Breast epithelium (tissue), 4 donors: ENCODE measurements at regions of chr11 and their contacts with region 1.

Region 1: GRCh38 chr11:124837491-124837856 is 27.8 kb upstream of the ROBO3 start:
- DNase-seq: no peak
- H3K4me3 ChIP-seq: no peak overlapping the region
- H3K27ac ChIP-seq: no peak overlapping the region
- H3K4me1 ChIP-seq: peaks cover 7 to 12% of the 10 kb centered on the region in 2 donors
- H3K27me3 ChIP-seq: peaks cover 10 to 51% of the 10 kb centered on the region in 2 donors
- CTCF ChIP-seq: no peak
- POLR2A ChIP-seq: no peak

Region 2: DNA sequence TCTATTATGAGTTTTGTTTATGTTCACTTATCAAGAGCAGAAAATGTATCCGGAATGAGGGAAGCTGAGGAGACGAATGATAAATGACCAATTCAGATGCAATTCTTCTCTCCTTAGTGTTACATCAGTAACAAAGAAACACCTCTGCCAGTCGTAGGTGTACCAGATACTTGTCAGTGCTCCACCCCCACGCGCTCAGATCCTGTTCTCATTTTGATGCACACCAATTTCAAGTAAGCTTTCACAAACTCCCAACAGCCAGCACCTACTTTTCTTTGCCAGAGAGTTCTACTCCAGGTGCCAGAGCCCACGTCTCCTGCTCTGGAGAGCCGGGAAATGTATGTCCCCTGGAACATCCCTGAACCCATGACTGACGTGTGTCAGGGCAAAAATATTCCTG is 337.8 kb before region 1 on chr11:
- intact Hi-C with region 1: loop called (anchors 5 kb)
- DNase-seq: no peak
- H3K4me3 ChIP-seq: no peak overlapping the region
- H3K27ac ChIP-seq: no peak overlapping the region
- H3K4me1 ChIP-seq: no peaks in the 10 kb centered on the region
- H3K27me3 ChIP-seq: no peaks in the 10 kb centered on the region
- CTCF ChIP-seq: no peak
- POLR2A ChIP-seq: no peak

Region 3: GRCh38 chr11:124644426-124645280 is 192.8 kb before region 1 on chr11:
- intact Hi-C with region 1: no loop called
- DNase-seq: peak in 1 of 2 donors; percentile 25
- H3K4me3 ChIP-seq: peak overlapping the region in 2 of 3 donors; percentile 30 to 51
- H3K27ac ChIP-seq: no peak overlapping the region
- H3K4me1 ChIP-seq: no peaks in the 10 kb centered on the region
- H3K27me3 ChIP-seq: no peaks in the 10 kb centered on the region
- CTCF ChIP-seq: peak; percentile 58 to 84 (median 83)
- POLR2A ChIP-seq: no peak

Region 4: GRCh38 chr11:124673333-124674167 is 163.9 kb before region 1 on chr11 and contains the starts of genes SIAE and SPA17:
- intact Hi-C with region 1: loop called (anchors 10 kb)
- DNase-seq: peak; percentile 92 to 93
- H3K4me3 ChIP-seq: peak within 1 kb of the TSS; percentile 70 to 77 (median 74)
- H3K27ac ChIP-seq: peak within 1 kb of the TSS; percentile 92 to 94
- H3K4me1 ChIP-seq: no peaks in the 10 kb centered on the region
- H3K27me3 ChIP-seq: no peaks in the 10 kb centered on the region
- CTCF ChIP-seq: no peak
- POLR2A ChIP-seq: peak; percentile 8
- total RNA-seq, gene SIAE: 12.5 to 17.0 (median 14.9) TPM
- total RNA-seq, gene SPA17: 2.9 to 15.2 (median 9.8) TPM

Region 5: DNA sequence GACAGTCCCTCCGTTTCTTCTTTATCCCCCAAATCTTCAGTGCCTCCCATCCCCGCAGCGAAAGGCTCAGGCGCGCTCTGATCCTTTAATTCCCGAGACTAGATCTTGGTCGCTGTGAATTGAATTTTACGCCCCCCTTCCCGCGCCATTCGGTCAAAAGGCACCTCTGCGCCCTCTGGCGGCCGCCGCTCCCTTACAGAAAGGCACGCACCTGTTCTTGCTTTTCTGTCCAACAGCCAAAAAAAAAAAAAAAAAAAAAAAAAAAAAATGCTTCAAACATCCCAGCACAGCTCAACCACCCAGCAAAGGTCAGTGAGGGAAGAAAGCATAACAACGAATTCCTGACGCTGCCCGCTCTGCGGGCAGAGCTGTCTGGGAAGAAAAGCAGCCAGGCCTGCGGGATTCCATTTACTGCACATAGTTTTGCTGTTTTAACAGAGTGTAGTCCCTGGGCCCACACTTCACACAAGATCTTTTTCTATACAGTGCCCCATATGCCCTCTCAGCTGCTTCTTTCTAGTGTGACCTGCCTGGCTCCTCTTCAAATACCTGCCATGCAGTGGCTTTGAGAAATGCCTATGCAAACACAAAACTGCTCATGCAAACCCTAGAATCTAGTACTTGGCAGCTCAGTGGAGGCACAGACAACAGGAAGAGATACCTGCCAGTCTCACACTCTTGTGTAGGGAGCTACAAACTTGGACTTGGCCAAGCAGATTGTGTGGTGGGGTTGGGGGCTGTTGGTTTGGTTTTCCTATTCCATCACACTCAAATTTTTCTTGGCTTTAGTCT is 74.1 kb before region 1 on chr11:
- intact Hi-C with region 1: loop called (anchors 2 kb)
- DNase-seq: peak; percentile 70 to 86
- H3K4me3 ChIP-seq: peak overlapping the region; percentile 52 to 66 (median 53)
- H3K27ac ChIP-seq: peak overlapping the region in 1 of 2 donors; percentile 85
- H3K4me1 ChIP-seq: peaks cover 0 to 8% of the 10 kb centered on the region in 2 donors
- H3K27me3 ChIP-seq: peaks cover 0 to 44% of the 10 kb centered on the region in 2 donors
- CTCF ChIP-seq: peak; percentile 60 to 67 (median 65)
- POLR2A ChIP-seq: no peak